Astrocyte of the cerebellum (primary cell): ENCODE measurements at regions of chr5 and their contacts with region 1.

Region 1: DNA sequence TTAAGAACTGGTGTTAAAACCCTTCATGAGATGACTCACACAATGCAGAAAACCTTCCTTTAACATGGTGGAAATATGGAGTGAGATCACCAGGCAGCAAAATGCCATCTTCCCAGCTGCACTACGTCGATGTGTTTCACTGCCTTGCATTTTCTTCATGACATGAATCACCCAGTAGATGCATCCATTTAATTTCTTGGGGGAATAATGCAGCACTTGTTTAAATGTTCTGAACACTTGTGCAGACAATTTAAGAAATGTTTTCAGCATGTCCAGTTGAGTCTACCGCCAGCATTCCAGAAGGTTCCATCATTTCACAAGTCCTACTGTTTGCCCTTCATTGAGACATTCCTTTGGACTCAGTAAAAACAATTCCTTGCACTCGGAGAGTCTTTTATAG is 81.6 kb downstream of the ADAMTS16 start:
- DNase-seq: no peak
- H3K4me3 ChIP-seq: no peak overlapping the region
- CTCF ChIP-seq: no peak

Region 2: GRCh38 chr5:5178136-5178535 is 43.6 kb before region 1 on chr5:
- in situ Hi-C with region 1: loop called (anchors 5 kb)
- DNase-seq: no peak
- H3K4me3 ChIP-seq: no peak overlapping the region
- CTCF ChIP-seq: no peak